Transverse colon (tissue), 4 donors: ENCODE measurements at regions of chr4 and their contacts with region 1.

Region 1: GRCh38 chr4:53377319-53378170 is at the start of gene FIP1L1:
- DNase-seq: peak; percentile 97
- H3K4me3 ChIP-seq: peak within 1 kb of the TSS; percentile 81 to 99 (median 93)
- H3K27ac ChIP-seq: peak within 1 kb of the TSS; percentile 90 to 98 (median 94)
- H3K4me1 ChIP-seq: peaks cover 0 to 32% (median 16%) of the 10 kb centered on the region in 4 donors
- H3K27me3 ChIP-seq: no peaks in the 10 kb centered on the region
- CTCF ChIP-seq: no peak
- EP300 ChIP-seq: no peak
- POLR2A ChIP-seq: peak; percentile 84
- total RNA-seq, gene FIP1L1: 20.6 to 97.5 (median 43.9) TPM

Region 2: GRCh38 chr4:53490965-53491622 is 113.5 kb after region 1 on chr4:
- in situ Hi-C with region 1: loop called in 1 of 4 experiments (anchors 25 kb)
- intact Hi-C with region 1: no loop called
- DNase-seq: peak; percentile 30
- H3K4me3 ChIP-seq: no peak overlapping the region
- H3K27ac ChIP-seq: peak overlapping the region; percentile 28 to 46 (median 38)
- H3K4me1 ChIP-seq: no peaks in the 10 kb centered on the region
- H3K27me3 ChIP-seq: no peaks in the 10 kb centered on the region
- CTCF ChIP-seq: peak; percentile 51 to 72 (median 60)
- EP300 ChIP-seq: no peak
- POLR2A ChIP-seq: no peak